ENCODE measurements at regions of chr5 and their contacts with region 1.

Region 1: DNA sequence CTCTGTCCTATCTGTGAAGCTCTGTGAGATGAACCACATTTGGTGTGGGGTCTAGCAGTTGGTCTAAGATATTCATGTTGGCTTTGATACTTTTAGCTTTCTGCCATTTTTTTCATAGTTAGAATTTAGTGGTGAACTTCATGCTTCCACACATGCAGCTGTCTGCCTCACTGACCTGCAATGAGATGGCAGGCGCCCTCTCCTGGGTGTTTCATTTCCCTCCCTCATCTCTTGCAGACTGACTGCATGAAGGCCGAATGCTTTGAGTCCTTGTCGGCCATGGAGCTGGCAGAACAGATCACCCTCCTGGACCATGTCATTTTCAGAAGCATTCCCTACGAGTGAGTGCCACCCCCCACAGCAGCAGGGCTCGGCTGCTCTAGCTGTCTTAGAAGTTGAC is 26.1 kb upstream of the CKMT2 start:
- DNase-seq: peak; percentile 49
- ATAC-seq: peak; percentile 83
- H3K4me3 Mint-ChIP-seq: no peak overlapping the region
- H3K27ac Mint-ChIP-seq: no peak overlapping the region
- H3K4me1 Mint-ChIP-seq: no peaks in the 10 kb centered on the region
- H3K27me3 Mint-ChIP-seq: no peaks in the 10 kb centered on the region
- CTCF ChIP-seq: no peak

Region 2: GRCh38 chr5:81023261-81023970 is 183.6 kb before region 1 on chr5:
- CTCF ChIA-PET with region 1: no interaction called
- POLR2A ChIA-PET with region 1: no interaction called
- DNase-seq: no peak
- ATAC-seq: peak; percentile 42; the same call in 1 of the 2 replicates
- H3K4me3 Mint-ChIP-seq: no peak overlapping the region
- H3K27ac Mint-ChIP-seq: no peak overlapping the region
- H3K4me1 Mint-ChIP-seq: peaks cover 14% of the 10 kb centered on the region
- H3K27me3 Mint-ChIP-seq: 0 out of 2 replicates have a peak, but pooled peaks cover 3% of the 10 kb centered on the region
- CTCF ChIP-seq: no peak

Region 3: DNA sequence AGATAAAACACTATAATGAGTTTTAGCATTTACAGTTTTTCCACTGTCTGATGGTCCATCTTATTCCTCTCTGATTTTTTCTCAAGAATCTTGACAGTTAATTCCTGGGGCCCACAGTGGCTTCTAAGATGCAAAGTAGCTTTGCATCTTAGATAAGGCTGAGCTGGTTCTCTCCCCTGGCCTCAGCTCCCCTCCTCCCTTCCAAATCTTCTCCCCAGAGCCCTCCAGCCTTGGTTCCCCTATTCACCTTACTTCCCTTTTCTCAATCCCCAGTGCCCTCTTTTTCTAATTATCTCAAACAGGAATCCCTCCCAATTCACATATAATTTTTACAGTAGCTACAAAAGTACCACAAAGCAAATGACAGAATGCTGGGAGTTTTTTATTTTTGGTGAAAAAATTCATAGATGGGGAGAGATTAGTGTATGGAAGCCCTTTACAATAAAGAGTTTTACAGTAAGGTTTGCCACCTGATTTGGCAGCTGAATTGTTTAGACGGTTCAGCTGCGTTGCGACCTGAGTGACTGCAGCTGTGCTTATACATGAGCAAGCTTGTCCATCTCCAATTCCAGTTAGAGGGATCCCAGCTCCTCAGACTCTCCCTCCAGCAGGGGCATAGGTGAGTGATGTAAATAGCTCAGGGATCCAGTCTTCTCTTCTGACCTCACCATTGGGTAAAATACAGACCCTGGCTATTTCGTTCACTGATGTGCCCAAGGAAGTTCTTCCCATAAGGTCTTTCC is 25.3 kb before region 1 on chr5:
- CTCF ChIA-PET with region 1: interaction called, 11 read pairs
- POLR2A ChIA-PET with region 1: no interaction called
- DNase-seq: no peak
- ATAC-seq: peak; percentile 70
- H3K4me3 Mint-ChIP-seq: no peak overlapping the region
- H3K27ac Mint-ChIP-seq: no peak overlapping the region
- H3K4me1 Mint-ChIP-seq: peaks cover 15% of the 10 kb centered on the region
- H3K27me3 Mint-ChIP-seq: no peaks in the 10 kb centered on the region
- CTCF ChIP-seq: no peak

Region 4: GRCh38 chr5:81233080-81233634 is 26.1 kb after region 1 on chr5 and contains the start of gene CKMT2:
- CTCF ChIA-PET with region 1: interaction called, 10 read pairs
- POLR2A ChIA-PET with region 1: no interaction called
- DNase-seq: peak; percentile 88
- ATAC-seq: peak; percentile 94
- H3K4me3 Mint-ChIP-seq: peak within 1 kb of the TSS; percentile 81
- H3K27ac Mint-ChIP-seq: peak within 1 kb of the TSS; percentile 89
- H3K4me1 Mint-ChIP-seq: peaks cover 28% of the 10 kb centered on the region
- H3K27me3 Mint-ChIP-seq: no peaks in the 10 kb centered on the region
- CTCF ChIP-seq: no peak
- total RNA-seq, gene CKMT2: 1.8 to 3.1 TPM (median 2.4 TPM) in 3 replicates

Region 5: DNA sequence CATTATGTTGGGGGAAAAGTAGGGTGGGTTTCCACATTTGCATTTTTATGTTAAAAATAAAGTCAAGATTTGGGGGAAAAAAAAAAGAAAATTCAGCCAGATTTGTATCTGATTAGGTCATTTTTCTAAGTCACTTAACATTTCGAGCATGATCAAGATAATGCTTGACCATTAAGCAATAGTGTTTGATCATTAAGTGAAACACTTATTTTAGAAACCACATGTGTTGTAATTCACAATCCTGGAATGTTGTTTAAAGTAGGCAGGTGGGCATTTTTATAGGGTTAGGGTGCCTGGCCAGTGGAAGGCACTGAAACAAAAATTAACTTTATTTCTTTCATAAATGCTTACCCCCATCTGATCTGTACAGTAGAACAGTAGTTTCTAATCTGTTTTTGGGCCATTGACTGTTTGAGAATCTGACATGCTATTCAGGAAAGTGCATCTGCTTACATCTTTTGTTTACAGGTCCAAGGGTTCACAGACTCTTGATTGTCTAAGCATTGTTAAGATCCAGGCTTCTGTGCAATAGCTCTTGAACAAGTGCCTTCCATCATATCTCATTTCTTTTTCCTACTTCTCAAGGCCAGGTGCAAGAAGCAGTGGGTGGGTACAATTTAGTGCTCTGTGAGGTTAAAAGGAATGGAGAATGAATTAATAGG is 103.5 kb after region 1 on chr5:
- CTCF ChIA-PET with region 1: no interaction called
- POLR2A ChIA-PET with region 1: no interaction called
- DNase-seq: no peak
- ATAC-seq: no peak
- H3K4me3 Mint-ChIP-seq: no peak overlapping the region
- H3K27ac Mint-ChIP-seq: no peak overlapping the region
- H3K4me1 Mint-ChIP-seq: peaks cover 3% of the 10 kb centered on the region; the same call in 1 of the 2 replicates
- H3K27me3 Mint-ChIP-seq: no peaks in the 10 kb centered on the region
- CTCF ChIP-seq: no peak

Measured in WTC11 (cell line).